ENCODE measurements at regions of chr19 and their contacts with region 1.

Region 1: DNA sequence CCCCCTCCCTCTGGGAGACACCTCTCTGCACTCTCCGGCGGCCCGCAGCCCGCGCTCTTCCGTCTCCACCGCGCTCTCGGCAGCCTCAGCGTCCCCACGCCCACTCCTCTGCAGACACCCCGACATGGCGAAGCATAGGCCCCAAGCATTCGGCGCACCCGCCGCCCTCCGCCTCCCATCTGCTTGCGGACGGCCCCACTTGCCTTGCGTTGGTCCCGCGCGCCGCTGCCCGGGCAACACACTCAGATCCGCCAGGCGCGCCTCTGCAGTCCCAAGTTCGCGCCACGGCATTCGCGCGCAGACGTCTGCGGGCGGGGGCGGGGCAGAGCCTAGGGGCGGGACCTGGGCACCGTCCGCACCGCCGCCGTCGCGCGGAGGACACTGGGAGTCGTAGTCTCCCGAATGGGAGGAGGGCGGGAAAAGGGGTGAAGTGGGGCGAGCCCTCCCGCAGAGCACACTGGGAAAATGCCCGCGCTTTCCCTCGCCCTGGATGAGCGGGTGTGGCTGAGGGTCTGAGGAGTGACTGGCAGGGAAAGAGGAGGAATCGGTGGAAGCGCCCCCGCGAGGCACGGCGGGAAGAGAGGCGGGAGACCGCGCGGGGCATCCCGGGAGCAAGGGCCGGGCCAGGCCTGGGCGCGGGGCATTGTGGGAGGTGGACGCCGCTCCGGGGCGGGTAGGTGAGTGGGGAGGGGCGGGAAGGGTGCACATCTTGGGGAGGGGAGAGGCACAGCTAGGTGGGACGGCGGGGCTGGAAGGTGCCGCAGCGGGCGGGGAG is at the starts of genes LIG1 and ZSWIM9:
- DNase-seq: peak; percentile 85 to 95 (median 92)
- H3K4me3 ChIP-seq: peak within 1 kb of the TSS; percentile 63 to 98 (median 87)
- H3K27ac ChIP-seq: peak within 1 kb of the TSS; percentile 80 to 99 (median 98)
- H3K27me3 ChIP-seq: no peaks in the 10 kb centered on the region
- CTCF ChIP-seq: peak in 52 of 56 donors; percentile 17 to 70 (median 50)
- total RNA-seq, gene LIG1: 12.7 to 39.6 (median 22.5) TPM
- total RNA-seq, gene ZSWIM9: 14.1 to 42.1 (median 18.4) TPM

Region 2: DNA sequence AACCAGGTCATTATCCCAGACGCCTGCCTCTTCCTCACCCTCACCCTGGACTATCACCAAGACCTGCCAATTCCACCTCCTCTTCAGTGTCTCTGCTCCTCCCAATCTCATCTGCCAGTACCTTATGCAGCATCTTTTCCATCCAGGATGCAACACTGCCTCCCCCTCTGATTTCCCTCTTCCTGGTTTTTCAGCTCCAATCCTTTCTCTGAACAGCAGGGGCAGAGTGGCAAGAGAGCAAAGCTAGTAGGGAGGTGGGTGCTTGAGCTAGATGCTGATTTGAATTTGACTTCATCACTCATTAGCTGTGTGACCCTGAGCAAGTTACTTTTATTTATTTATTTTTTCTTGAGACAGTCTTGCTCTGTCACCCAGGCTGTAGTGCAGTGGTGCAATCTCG is 100.8 kb before region 1 on chr19:
- intact Hi-C with region 1: no loop called
- DNase-seq: no peak
- H3K4me3 ChIP-seq: no peak overlapping the region
- H3K27ac ChIP-seq: no peak overlapping the region
- H3K27me3 ChIP-seq: no peaks in the 10 kb centered on the region
- CTCF ChIP-seq: no peak

Region 3: DNA sequence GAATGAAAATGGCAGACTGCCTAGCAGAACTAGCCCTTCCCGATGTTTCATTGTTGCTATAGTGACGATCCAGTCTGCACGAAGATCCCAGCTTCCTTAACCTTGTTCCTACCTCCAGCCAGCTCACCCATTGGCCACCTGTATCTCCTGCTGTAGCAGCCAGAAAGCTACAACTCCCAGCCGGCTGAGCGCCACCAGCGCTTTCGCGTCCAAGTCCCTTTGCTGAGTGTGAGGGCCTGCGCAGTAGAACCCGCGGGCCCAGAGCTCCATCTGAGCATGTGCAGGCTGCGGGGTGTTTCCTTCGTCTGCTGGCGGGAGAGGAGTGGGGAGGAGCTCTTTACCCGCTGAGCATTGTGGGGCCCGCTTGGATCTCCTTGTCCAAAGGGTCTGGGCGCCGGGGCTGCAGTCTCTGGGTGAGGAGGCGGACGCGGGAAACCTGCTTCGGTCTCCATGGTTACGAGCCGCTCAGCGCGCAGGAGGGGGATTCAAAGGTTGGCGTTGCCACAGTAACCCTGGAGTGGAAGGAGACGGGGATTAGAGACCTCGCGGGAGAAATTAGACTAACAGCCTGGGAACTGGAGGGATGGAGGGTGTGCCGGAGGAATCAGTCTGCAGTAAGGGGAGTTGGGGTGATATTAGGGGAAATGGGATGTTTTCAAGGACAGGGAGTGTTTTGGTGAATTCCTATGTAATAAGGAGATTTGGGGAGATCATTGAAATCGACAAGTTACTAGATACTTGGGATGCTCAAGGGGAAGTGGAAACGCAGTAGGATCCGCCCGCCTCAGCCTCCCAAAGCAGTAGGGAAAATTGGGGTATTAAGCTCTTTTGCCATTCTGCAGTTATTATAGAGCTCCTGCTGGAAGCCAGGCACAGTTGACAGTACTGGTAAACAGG is 33.8 kb after region 1 on chr19:
- intact Hi-C with region 1: loop called (anchors 1 to 5 kb)
- DNase-seq: peak; percentile 93 to 98 (median 97)
- H3K4me3 ChIP-seq: peak overlapping the region; percentile 52 to 95 (median 78)
- H3K27ac ChIP-seq: peak overlapping the region; percentile 51 to 94 (median 85)
- H3K27me3 ChIP-seq: no peaks in the 10 kb centered on the region
- CTCF ChIP-seq: peak in 46 of 56 donors; percentile 8 to 63 (median 43)

Region 4: DNA sequence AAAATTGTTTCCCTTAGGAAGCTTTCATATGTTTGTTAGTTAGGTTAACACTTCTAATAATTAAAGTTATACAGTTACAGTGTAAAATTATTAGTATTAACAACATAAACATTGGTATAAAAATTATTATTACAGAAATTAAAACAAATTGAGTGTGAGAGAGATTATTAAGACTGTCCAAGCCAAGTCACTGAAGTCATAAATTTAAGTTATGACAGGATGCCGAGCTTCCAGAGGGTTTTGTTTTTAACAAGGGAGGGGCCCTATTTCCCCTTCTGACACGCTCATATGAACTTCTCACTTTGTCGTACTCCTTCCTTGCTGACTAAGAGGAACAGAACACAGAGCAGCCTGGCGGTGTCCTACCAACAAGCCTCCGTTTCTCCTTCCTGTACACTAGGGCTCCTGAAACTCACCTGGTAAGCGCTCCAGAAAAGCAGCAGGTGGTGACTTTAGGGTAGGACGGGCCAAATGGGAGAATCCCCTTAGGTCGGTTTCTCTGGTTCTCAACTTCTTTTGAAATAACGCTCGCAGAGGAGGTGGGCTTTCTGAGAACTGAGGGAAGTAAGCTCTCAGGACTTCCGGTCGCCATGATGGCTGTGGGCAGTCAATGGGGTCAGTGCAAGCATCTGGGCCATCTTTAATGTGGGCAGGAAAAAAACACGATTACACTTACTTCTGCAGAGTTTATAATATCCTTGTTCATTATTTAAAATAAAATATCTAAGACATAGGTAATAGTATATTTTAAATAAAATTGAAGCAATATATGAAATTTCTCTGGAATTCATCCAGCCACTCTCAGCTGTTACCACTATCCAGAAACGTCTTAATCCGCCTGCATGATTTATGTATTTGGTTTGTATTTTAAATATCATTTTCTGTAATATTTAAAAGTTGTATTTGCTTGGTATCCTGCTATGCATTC is 85.4 kb after region 1 on chr19 and contains the start of gene CARD8:
- intact Hi-C with region 1: loop called (anchors 1 to 10 kb)
- DNase-seq: peak; percentile 65 to 87 (median 78)
- H3K4me3 ChIP-seq: peak within 1 kb of the TSS; percentile 46 to 90 (median 70)
- H3K27ac ChIP-seq: peak within 1 kb of the TSS; percentile 16 to 97 (median 88)
- H3K27me3 ChIP-seq: no peaks in the 10 kb centered on the region
- CTCF ChIP-seq: peak in 40 of 56 donors; percentile 11 to 64 (median 34)
- total RNA-seq, gene CARD8: 10.8 to 45.2 (median 24.0) TPM

Measured in dorsolateral prefrontal cortex (tissue), 120 donors.